B cell (primary cell): ENCODE measurements at regions of chr7 and their contacts with region 1.

Region 1: GRCh38 chr7:130929896-130930659 is 196.1 kb upstream of the KLF14 start:
- DNase-seq: peak; percentile 81
- ATAC-seq: peak; percentile 57
- H3K4me3 ChIP-seq: no peak overlapping the region
- H3K4me3 Mint-ChIP-seq: peak overlapping the region; percentile 38
- H3K27ac ChIP-seq: peak overlapping the region; percentile 48 to 86
- H3K27ac Mint-ChIP-seq: peak overlapping the region; percentile 91
- H3K4me1 ChIP-seq: peaks cover 36 to 40% of the 10 kb centered on the region in 2 donors
- H3K4me1 Mint-ChIP-seq: peaks cover 71% of the 10 kb centered on the region
- H3K27me3 ChIP-seq: no peaks in the 10 kb centered on the region
- H3K27me3 Mint-ChIP-seq: no peaks in the 10 kb centered on the region
- CTCF ChIP-seq: no peak

Region 2: GRCh38 chr7:130814778-130815335 is 115.2 kb before region 1 on chr7:
- CTCF ChIA-PET with region 1: no interaction called
- POLR2A ChIA-PET with region 1: no interaction called
- intact Hi-C with region 1: no loop called
- DNase-seq: no peak
- ATAC-seq: no peak
- H3K4me3 ChIP-seq: no peak overlapping the region
- H3K4me3 Mint-ChIP-seq: no peak overlapping the region
- H3K27ac ChIP-seq: no peak overlapping the region
- H3K27ac Mint-ChIP-seq: no peak overlapping the region
- H3K4me1 ChIP-seq: no peaks in the 10 kb centered on the region
- H3K4me1 Mint-ChIP-seq: no peaks in the 10 kb centered on the region
- H3K27me3 ChIP-seq: no peaks in the 10 kb centered on the region
- H3K27me3 Mint-ChIP-seq: peaks cover 10% of the 10 kb centered on the region
- CTCF ChIP-seq: peak; percentile 17

Region 3: DNA sequence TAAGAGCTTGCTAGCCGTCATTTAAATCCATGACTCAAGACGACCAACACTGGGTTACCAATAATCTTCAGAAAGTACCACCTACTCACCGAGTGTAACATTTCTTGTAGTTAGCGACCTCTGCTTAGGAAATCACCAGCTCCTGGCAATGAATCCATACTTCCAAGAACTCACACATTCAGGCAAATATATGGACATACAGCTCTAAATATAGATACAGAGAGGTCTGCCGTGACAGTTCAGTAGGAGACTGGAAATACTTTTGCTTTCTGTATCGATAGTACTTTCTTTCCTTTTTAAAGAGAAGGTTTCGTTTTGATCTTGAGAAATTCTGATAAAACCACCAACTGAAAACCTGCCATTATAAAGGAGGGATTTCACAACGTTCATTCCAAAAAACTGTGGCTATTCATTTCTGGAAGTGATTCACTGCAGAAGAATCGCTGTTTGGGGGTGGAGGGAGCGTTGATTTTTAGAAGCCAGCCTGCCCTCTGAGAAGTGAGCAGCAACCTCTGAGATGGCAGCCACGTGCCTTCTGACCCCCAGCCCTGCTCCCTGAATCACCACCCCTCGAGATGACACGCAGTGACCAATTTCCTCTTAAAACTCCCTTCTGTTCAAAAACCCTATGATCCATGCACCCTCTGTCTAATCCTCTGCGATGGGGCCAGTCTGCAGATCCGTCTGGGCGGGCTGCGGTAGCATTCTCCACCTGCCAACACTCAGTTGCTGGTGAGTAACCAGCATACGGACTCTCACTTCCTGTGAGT is 17.0 kb before region 1 on chr7:
- CTCF ChIA-PET with region 1: interaction called, 8 read pairs
- POLR2A ChIA-PET with region 1: interaction called, 4 read pairs
- intact Hi-C with region 1: loop called (anchors 2 kb)
- DNase-seq: peak; percentile 92
- ATAC-seq: peak; percentile 91
- H3K4me3 ChIP-seq: peak overlapping the region; percentile 54 to 98 (median 73)
- H3K4me3 Mint-ChIP-seq: peak overlapping the region; percentile 90
- H3K27ac ChIP-seq: peak overlapping the region; percentile 82 to 98
- H3K27ac Mint-ChIP-seq: peak overlapping the region; percentile 84
- H3K4me1 ChIP-seq: peaks cover 28 to 37% of the 10 kb centered on the region in 2 donors
- H3K4me1 Mint-ChIP-seq: peaks cover 78% of the 10 kb centered on the region
- H3K27me3 ChIP-seq: no peaks in the 10 kb centered on the region
- H3K27me3 Mint-ChIP-seq: no peaks in the 10 kb centered on the region
- CTCF ChIP-seq: no peak

Region 4: GRCh38 chr7:130941322-130942210 is 11.5 kb after region 1 on chr7:
- CTCF ChIA-PET with region 1: interaction called, 3 read pairs
- POLR2A ChIA-PET with region 1: interaction called, 4 read pairs
- intact Hi-C with region 1: loop called (anchors 2 kb)
- DNase-seq: peak; percentile 55
- ATAC-seq: no peak
- H3K4me3 ChIP-seq: peak overlapping the region; percentile 9 to 42 (median 28)
- H3K4me3 Mint-ChIP-seq: peak overlapping the region; percentile 76
- H3K27ac ChIP-seq: peak overlapping the region; percentile 38 to 92
- H3K27ac Mint-ChIP-seq: peak overlapping the region; percentile 65
- H3K4me1 ChIP-seq: peaks cover 34 to 38% of the 10 kb centered on the region in 2 donors
- H3K4me1 Mint-ChIP-seq: peaks cover 83% of the 10 kb centered on the region
- H3K27me3 ChIP-seq: no peaks in the 10 kb centered on the region
- H3K27me3 Mint-ChIP-seq: no peaks in the 10 kb centered on the region
- CTCF ChIP-seq: no peak

Region 5: DNA sequence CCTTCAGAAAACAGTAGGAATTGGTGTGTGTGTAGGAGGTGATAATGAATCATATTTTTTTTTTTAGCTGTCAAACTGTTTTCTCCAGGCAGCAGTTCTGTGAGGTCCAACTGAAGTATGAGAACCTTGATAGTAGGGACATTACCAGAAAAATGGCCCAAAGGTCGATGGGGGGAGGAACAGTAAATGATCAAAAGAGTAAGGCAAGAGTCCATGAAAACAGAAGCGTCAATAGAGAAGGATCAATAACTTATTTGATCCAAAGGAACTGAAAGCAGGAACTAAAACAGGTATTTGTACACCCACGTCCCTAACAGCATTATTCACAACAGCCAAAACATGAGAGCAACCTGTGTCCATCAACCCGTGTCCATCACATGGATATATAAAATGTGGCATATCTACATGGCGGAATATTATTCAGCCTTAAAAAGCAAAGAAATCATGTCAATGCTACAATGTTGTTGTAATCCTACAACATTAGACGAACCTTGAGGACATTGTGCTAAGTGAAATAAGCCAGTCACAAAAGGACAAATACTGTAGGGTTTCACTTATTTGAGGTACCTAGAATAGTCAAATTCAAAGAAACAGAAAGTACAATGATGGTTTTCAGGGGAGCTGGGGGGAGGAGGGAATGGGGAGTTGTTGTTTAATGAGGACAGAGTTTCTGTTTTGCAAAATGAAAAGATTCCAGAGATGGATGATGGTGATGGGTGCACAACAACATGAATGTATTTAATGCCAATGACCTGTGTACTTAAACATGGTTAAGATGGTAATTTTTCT is 17.9 kb after region 1 on chr7:
- CTCF ChIA-PET with region 1: interaction called, 3 read pairs
- POLR2A ChIA-PET with region 1: interaction called, 12 read pairs
- intact Hi-C with region 1: loop called (anchors 2 kb)
- DNase-seq: no peak
- ATAC-seq: no peak
- H3K4me3 ChIP-seq: no peak overlapping the region
- H3K4me3 Mint-ChIP-seq: peak overlapping the region; percentile 44
- H3K27ac ChIP-seq: peak overlapping the region; percentile 5 to 67
- H3K27ac Mint-ChIP-seq: peak overlapping the region; percentile 26
- H3K4me1 ChIP-seq: peaks cover 35 to 58% of the 10 kb centered on the region in 2 donors
- H3K4me1 Mint-ChIP-seq: peaks cover 60% of the 10 kb centered on the region
- H3K27me3 ChIP-seq: no peaks in the 10 kb centered on the region
- H3K27me3 Mint-ChIP-seq: no peaks in the 10 kb centered on the region
- CTCF ChIP-seq: no peak

Region 6: GRCh38 chr7:130996841-130997231 is 66.8 kb after region 1 on chr7:
- CTCF ChIA-PET with region 1: no interaction called
- POLR2A ChIA-PET with region 1: interaction called, 10 read pairs
- intact Hi-C with region 1: no loop called
- DNase-seq: peak; percentile 46
- ATAC-seq: peak; percentile 44
- H3K4me3 ChIP-seq: no peak overlapping the region
- H3K4me3 Mint-ChIP-seq: peak overlapping the region; percentile 55
- H3K27ac ChIP-seq: peak overlapping the region in 1 of 2 donors; percentile 59
- H3K27ac Mint-ChIP-seq: peak overlapping the region; percentile 84
- H3K4me1 ChIP-seq: peaks cover 55 to 57% of the 10 kb centered on the region in 2 donors
- H3K4me1 Mint-ChIP-seq: peaks cover 66% of the 10 kb centered on the region
- H3K27me3 ChIP-seq: no peaks in the 10 kb centered on the region
- H3K27me3 Mint-ChIP-seq: no peaks in the 10 kb centered on the region
- CTCF ChIP-seq: no peak